OCI-LY7 (cell line): ENCODE measurements at regions of chr1 and their contacts with region 1.

Region 1: GRCh38 chr1:93042187-93043056 is 36.7 kb upstream of the MTF2 start:
- DNase-seq: peak; percentile 43
- H3K4me3 ChIP-seq: peak overlapping the region; percentile 25
- H3K27ac ChIP-seq: no peak overlapping the region
- H3K4me1 ChIP-seq: peaks cover 31% of the 10 kb centered on the region
- CTCF ChIP-seq: no peak

Region 2: GRCh38 chr1:92872719-92873118 is 169.7 kb before region 1 on chr1:
- CTCF ChIA-PET with region 1: no interaction called
- POLR2A ChIA-PET with region 1: no interaction called
- intact Hi-C with region 1: no loop called
- DNase-seq: no peak
- H3K4me3 ChIP-seq: no peak overlapping the region
- H3K27ac ChIP-seq: no peak overlapping the region
- H3K4me1 ChIP-seq: peaks cover 18% of the 10 kb centered on the region
- CTCF ChIP-seq: no peak

Region 3: GRCh38 chr1:93056214-93056613 is 13.8 kb after region 1 on chr1:
- CTCF ChIA-PET with region 1: interaction called, 3 read pairs
- POLR2A ChIA-PET with region 1: interaction called, 7 read pairs
- intact Hi-C with region 1: loop called (anchors 2 kb)
- DNase-seq: peak; percentile 46
- H3K4me3 ChIP-seq: no peak overlapping the region
- H3K27ac ChIP-seq: no peak overlapping the region
- H3K4me1 ChIP-seq: peaks cover 21% of the 10 kb centered on the region
- CTCF ChIP-seq: 0 out of 2 replicates have a peak, but pooled peaks have one; percentile 17